Naive thymus-derived CD4-positive, alpha-beta T cell (primary cell): ENCODE measurements at regions of chr2 and their contacts with region 1.

Region 1: DNA sequence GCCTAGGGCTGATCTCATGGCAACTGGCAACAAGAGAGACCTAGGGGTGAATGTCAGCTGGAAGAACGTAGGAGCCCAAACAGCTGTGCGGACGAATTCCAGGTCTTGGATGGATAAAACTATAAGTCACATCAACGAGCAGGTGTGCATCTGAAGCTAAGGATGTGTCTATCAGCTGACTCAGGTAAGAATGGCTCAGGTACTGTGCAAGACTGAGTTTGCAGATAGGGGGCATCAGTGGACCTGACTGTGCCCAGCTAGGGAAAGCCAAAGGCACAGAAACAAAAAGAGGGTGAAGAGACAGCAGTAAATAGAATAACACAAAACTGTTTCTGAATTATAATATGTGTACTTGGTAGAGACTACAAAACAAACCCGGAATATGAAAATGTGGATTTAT is 357.3 kb downstream of the ZEB2 start:
- DNase-seq: peak in 4 of 9 donors; percentile 4 to 16 (median 14)
- ATAC-seq: peak; percentile 63
- H3K4me3 ChIP-seq: no peak overlapping the region
- H3K4me3 Mint-ChIP-seq: no peak overlapping the region
- H3K27ac ChIP-seq: no peak overlapping the region
- H3K27ac Mint-ChIP-seq: peak overlapping the region in 1 of 9 donors; percentile 13
- H3K4me1 ChIP-seq: no peaks in the 10 kb centered on the region
- H3K4me1 Mint-ChIP-seq: no peaks in the 10 kb centered on the region
- H3K27me3 ChIP-seq: no peaks in the 10 kb centered on the region
- H3K27me3 Mint-ChIP-seq: no peaks in the 10 kb centered on the region

Region 2: DNA sequence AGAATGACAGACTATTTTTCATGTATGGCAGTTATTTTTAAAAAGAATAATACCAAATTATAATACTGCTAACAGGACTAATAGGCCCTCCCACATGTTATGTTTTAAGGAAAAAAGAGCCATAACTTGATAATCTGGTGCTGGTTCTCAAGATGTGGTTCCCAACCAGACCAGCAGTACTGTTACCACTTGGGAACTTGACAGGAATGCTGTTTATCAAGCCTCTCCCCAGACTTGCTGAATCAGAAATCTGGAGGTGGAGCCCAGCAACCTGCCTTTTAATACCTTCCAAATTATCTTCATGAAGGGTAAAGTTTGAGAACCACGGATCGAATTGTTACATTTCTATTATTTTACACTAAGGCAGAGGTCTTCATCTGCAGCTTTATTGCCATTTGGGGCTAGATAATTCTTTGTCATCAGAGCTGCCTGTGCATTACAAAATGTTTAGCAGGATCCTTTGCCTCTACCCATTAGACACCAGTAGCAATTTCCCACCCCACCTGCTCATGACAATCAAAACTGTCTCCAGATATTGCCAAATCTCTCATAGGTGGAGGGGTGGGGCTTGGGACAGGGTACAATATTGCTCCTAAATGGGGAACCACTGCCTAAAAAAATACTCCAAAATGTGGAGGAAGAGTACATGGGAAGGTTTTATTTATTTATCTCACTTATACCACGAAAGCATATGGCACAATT is 403.9 kb before region 1 on chr2:
- CTCF ChIA-PET with region 1: no interaction called
- POLR2A ChIA-PET with region 1: no interaction called
- intact Hi-C with region 1: no loop called
- DNase-seq: no peak
- ATAC-seq: no peak
- H3K4me3 ChIP-seq: no peak overlapping the region
- H3K4me3 Mint-ChIP-seq: no peak overlapping the region
- H3K27ac ChIP-seq: no peak overlapping the region
- H3K27ac Mint-ChIP-seq: no peak overlapping the region
- H3K4me1 ChIP-seq: no peaks in the 10 kb centered on the region
- H3K4me1 Mint-ChIP-seq: peaks cover 0 to 13% (median 7%) of the 10 kb centered on the region in 7 donors
- H3K27me3 ChIP-seq: no peaks in the 10 kb centered on the region
- H3K27me3 Mint-ChIP-seq: no peaks in the 10 kb centered on the region

Region 3: DNA sequence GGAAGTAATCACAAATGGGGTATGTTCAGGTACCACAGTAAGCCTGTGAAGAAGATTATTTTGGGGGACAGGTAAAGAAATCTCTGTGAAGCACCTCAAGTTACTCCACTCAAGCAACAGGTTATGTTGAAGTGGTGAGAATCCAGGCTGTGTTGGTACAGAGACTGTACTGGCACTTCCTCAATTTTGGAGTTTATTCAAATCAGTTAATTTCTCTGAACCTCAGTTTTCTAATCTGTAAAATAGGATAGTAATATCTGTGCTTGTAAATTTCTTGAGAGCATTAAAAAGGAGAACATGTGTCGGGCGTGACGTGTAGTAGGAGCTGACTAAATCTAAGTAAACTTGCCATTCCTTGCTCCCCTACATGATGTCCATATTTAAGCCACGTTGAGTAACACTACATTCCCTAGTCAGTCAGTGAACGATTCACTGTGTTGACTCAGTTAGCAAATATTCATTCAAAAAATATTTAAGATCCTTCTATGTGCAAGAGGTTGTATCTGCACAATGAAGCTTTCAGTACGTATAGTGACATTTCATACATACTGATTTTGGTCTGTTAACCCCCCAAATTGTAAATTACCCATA is 146.9 kb before region 1 on chr2:
- CTCF ChIA-PET with region 1: no interaction called
- POLR2A ChIA-PET with region 1: no interaction called
- intact Hi-C with region 1: no loop called
- DNase-seq: no peak
- ATAC-seq: no peak
- H3K4me3 ChIP-seq: no peak overlapping the region
- H3K4me3 Mint-ChIP-seq: no peak overlapping the region
- H3K27ac ChIP-seq: no peak overlapping the region
- H3K27ac Mint-ChIP-seq: no peak overlapping the region
- H3K4me1 ChIP-seq: no peaks in the 10 kb centered on the region
- H3K4me1 Mint-ChIP-seq: peaks cover 0 to 2% (median 0%) of the 10 kb centered on the region in 7 donors
- H3K27me3 ChIP-seq: no peaks in the 10 kb centered on the region
- H3K27me3 Mint-ChIP-seq: no peaks in the 10 kb centered on the region

Region 4: GRCh38 chr2:144516981-144517865 is 354.6 kb after region 1 on chr2:
- CTCF ChIA-PET with region 1: no interaction called
- POLR2A ChIA-PET with region 1: no interaction called
- intact Hi-C with region 1: loop called in 1 of 2 experiments (anchors 1 kb)
- DNase-seq: peak in 6 of 9 donors; percentile 14 to 62 (median 32)
- ATAC-seq: peak; percentile 62
- H3K4me3 ChIP-seq: peak overlapping the region; percentile 49
- H3K4me3 Mint-ChIP-seq: no peak overlapping the region
- H3K27ac ChIP-seq: peak overlapping the region; percentile 37
- H3K27ac Mint-ChIP-seq: peak overlapping the region in 3 of 9 donors; percentile 46 to 85 (median 52)
- H3K4me1 ChIP-seq: peaks cover 21 to 22% of the 10 kb centered on the region in 2 donors
- H3K4me1 Mint-ChIP-seq: peaks cover 5 to 22% (median 18%) of the 10 kb centered on the region in 7 donors
- H3K27me3 ChIP-seq: peaks cover 0 to 33% of the 10 kb centered on the region in 2 donors
- H3K27me3 Mint-ChIP-seq: peaks cover 38 to 60% (median 52%) of the 10 kb centered on the region in 5 donors